Heart right ventricle (tissue), 16 donors: ENCODE measurements at regions of chr11 and their contacts with region 1.

Region 1: GRCh38 chr11:120235024-120235861 is 4.7 kb upstream of the POU2F3 start:
- DNase-seq: peak; percentile 48 to 65
- ATAC-seq: peak; percentile 66 to 87 (median 75)
- H3K4me3 ChIP-seq: no peak overlapping the region
- H3K27ac ChIP-seq: no peak overlapping the region
- H3K4me1 ChIP-seq: peaks cover 0 to 6% (median 0%) of the 10 kb centered on the region in 9 donors
- H3K27me3 ChIP-seq: peaks cover 7 to 44% (median 31%) of the 10 kb centered on the region in 7 donors
- CTCF ChIP-seq: peak; percentile 41 to 83 (median 77)

Region 2: GRCh38 chr11:120079750-120080490 is 155.3 kb before region 1 on chr11:
- intact Hi-C with region 1: no loop called
- DNase-seq: peak in 1 of 2 donors; percentile 38
- ATAC-seq: peak in 7 of 8 donors; percentile 20 to 61 (median 51)
- H3K4me3 ChIP-seq: no peak overlapping the region
- H3K27ac ChIP-seq: no peak overlapping the region
- H3K4me1 ChIP-seq: peaks cover 0 to 8% (median 0%) of the 10 kb centered on the region in 9 donors
- H3K27me3 ChIP-seq: peaks cover 0 to 31% (median 0%) of the 10 kb centered on the region in 7 donors
- CTCF ChIP-seq: peak; percentile 38 to 72 (median 63)

Region 3: GRCh38 chr11:120108154-120108865 is 126.9 kb before region 1 on chr11:
- intact Hi-C with region 1: no loop called
- DNase-seq: peak; percentile 48 to 71
- ATAC-seq: peak; percentile 77 to 94 (median 86)
- H3K4me3 ChIP-seq: no peak overlapping the region
- H3K27ac ChIP-seq: no peak overlapping the region
- H3K4me1 ChIP-seq: no peaks in the 10 kb centered on the region
- H3K27me3 ChIP-seq: peaks cover 0 to 36% (median 13%) of the 10 kb centered on the region in 7 donors
- CTCF ChIP-seq: peak; percentile 94 to 100 (median 99)

Region 4: DNA sequence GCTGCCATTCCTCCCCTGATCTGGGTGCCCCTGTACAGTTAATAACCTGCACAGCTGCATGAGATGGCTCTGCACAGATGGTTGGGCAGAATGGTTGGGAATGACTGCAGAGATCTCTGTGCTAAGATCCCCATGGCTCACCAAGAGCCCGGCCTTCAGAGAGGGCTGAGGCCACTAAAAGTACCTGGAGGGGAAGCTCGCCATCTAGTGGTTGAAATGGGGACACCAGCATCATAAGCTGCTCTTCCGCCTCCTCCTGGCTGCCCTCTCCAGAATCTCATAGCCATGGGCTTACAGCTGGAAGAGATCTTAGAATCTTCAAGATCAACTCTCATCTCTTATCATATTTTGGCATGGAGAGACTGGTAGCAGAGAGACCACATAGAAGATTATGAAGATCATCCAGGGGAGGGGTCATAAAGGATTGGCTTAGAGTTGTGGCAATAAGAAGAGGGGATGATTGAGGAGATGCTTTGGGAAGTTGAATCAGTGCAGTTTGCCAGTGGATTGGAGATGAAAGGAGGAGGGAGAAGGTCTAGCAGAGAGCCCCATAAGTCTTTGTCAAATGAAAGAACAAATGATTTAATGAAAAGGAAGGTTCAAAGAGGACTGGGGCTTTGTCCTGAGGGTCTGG is 67.9 kb after region 1 on chr11:
- intact Hi-C with region 1: loop called (anchors 1 to 5 kb)
- DNase-seq: peak; percentile 42 to 65
- ATAC-seq: peak in 7 of 8 donors; percentile 67 to 80 (median 77)
- H3K4me3 ChIP-seq: no peak overlapping the region
- H3K27ac ChIP-seq: no peak overlapping the region
- H3K4me1 ChIP-seq: peaks cover 0 to 12% (median 0%) of the 10 kb centered on the region in 9 donors
- H3K27me3 ChIP-seq: peaks cover 0 to 24% (median 13%) of the 10 kb centered on the region in 7 donors
- CTCF ChIP-seq: peak; percentile 69 to 94 (median 89)

Region 5: GRCh38 chr11:120482149-120482548 is 246.9 kb after region 1 on chr11:
- intact Hi-C with region 1: no loop called
- DNase-seq: no peak
- ATAC-seq: peak in 1 of 8 donors; percentile 19
- H3K4me3 ChIP-seq: no peak overlapping the region
- H3K27ac ChIP-seq: no peak overlapping the region
- H3K4me1 ChIP-seq: no peaks in the 10 kb centered on the region
- H3K27me3 ChIP-seq: no peaks in the 10 kb centered on the region
- CTCF ChIP-seq: no peak